ENCODE measurements at regions of chr1 and their contacts with region 1.

Region 1: DNA sequence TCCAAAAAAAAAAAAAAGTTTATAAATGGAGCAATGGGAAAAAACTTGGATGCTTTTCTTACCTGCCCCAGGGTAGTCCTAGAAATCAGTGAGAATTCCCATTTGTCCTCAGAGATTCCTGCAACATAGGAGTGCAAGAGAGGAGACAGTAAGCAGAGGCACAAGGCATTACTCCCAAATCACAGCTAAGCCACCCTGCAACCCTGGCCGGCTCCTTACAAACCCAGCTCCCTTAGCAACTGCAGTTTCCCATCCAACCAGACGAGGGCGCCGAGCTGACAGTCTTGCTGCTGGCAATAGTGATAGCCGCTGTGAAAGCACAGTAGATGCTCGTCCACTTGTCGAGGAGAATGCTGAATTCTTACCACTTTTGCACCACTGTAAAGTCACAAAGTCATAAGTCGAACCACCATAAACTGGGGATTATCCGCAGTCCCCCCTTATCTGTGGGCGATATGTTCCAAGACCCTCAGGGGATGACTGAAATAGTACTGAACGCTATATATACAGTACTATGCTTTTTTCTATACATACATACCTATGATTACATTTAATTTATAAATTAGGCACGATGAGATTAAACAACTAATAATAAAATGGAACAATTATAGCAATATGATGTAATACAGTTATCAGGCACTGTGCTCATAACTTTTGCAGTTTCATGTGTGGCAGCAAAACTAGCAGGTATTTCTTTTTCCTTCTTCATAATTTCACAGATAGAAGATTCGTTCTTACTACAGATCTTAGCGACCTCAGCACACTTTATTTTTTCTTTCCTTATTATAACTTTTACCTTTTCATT is 6.0 kb upstream of the PITHD1 start:
- DNase-seq: peak; percentile 92
- H3K4me3 Mint-ChIP-seq: no peak overlapping the region
- H3K27ac Mint-ChIP-seq: no peak overlapping the region
- H3K4me1 Mint-ChIP-seq: peaks cover 31% of the 10 kb centered on the region
- H3K27me3 Mint-ChIP-seq: no peaks in the 10 kb centered on the region

Region 2: DNA sequence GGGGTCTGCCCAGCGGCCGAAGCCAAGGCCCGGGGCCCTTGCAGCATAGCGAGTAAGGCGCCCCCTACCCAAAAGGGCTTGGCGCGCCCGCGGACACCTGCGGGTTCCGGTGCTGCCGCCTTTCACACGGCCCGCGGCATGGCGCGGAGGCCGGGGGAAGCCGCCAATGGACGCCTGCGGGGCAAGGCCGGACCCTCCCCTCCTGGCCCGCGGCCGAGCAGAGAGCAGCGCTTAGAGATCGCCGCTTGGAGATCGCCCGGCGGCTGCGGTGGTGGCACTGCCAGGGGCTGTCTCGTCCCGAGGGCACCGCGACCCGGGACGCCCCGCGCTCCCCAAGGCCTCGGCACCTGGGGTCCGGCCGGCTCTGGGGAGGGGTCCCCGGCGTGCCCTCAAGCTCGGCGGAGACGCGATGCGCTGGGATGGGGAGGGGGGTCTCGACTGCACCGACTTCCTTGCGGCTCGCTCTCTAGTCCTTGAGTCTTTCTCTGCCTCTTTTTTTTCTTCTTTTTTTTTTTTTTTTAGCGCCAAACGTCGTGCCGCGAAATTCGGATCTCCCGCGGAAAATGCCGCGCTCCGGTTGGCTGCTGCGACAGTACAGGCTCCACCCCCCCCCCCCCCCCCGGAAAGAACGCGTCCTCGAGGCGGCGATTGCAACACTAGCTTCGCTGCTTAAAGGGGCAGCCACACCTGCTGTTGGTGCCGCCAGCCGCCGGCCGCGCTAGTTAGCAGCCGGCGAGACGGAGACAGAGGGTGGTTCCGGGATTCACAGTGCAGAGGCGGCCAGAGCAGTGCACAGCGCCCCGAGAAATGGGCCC is 241.3 kb before region 1 on chr1 and contains the start of gene E2F2:
- CTCF ChIA-PET with region 1: no interaction called
- DNase-seq: peak; percentile 89
- H3K4me3 Mint-ChIP-seq: peak within 1 kb of the TSS; percentile 95
- H3K27ac Mint-ChIP-seq: peak within 1 kb of the TSS; percentile 96
- H3K4me1 Mint-ChIP-seq: peaks cover 76% of the 10 kb centered on the region
- H3K27me3 Mint-ChIP-seq: no peaks in the 10 kb centered on the region

Region 3: DNA sequence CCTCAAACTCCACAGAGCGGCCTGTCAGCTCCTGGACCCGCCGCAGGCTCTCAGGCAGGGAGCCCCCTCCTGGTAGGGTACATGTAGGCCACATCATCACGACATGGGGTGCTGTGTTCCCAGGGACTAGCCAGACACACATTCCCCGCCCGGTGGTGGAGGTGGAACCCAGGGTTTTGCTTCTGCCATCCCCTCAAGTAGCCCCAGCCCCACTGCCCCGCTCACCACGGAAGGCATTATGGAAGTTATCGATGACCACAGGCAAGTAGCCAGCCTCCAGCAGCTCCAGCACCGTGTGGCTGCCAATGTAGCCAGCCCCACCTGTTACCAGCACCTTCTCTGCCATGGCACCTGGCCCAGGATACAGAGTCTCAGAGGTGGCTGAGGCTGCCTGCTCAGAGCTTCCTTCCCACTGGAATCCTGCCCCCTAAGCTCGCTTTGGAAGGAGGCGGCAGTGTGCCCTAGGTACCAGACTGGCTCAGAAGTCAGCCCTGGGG is 26.5 kb after region 1 on chr1:
- CTCF ChIA-PET with region 1: interaction called, 15 read pairs
- DNase-seq: no peak
- H3K4me3 Mint-ChIP-seq: peak overlapping the region; percentile 93
- H3K27ac Mint-ChIP-seq: peak overlapping the region; percentile 90
- H3K4me1 Mint-ChIP-seq: peaks cover 24% of the 10 kb centered on the region
- H3K27me3 Mint-ChIP-seq: no peaks in the 10 kb centered on the region

Region 4: GRCh38 chr1:23916209-23917131 is 144.2 kb after region 1 on chr1:
- CTCF ChIA-PET with region 1: interaction called, 48 read pairs
- DNase-seq: peak; percentile 78
- H3K4me3 Mint-ChIP-seq: no peak overlapping the region
- H3K27ac Mint-ChIP-seq: no peak overlapping the region
- H3K4me1 Mint-ChIP-seq: peaks cover 34% of the 10 kb centered on the region
- H3K27me3 Mint-ChIP-seq: peaks cover 16% of the 10 kb centered on the region